Left cardiac atrium (tissue), 4 donors: ENCODE measurements at regions of chr9 and their contacts with region 1.

Region 1: GRCh38 chr9:12819436-12820185 is 44.8 kb downstream of the LURAP1L start:
- DNase-seq: no peak
- ATAC-seq: no peak

Region 2: GRCh38 chr9:12785260-12785770 is 34.3 kb before region 1 on chr9:
- intact Hi-C with region 1: no loop called
- DNase-seq: no peak
- ATAC-seq: peak; percentile 44 to 70

Region 3: GRCh38 chr9:12859704-12860251 is 40.2 kb after region 1 on chr9:
- intact Hi-C with region 1: loop called in 1 of 2 experiments (anchors 5 kb)
- DNase-seq: no peak
- ATAC-seq: peak in 1 of 2 donors; percentile 74

Region 4: GRCh38 chr9:13956107-13956506 is 1136.5 kb after region 1 on chr9:
- intact Hi-C with region 1: no loop called
- DNase-seq: no peak
- ATAC-seq: no peak